Activated CD4-positive, alpha-beta T cell treated with anti-CD3 and anti-CD28 coated beads, Interleukin-2, amount 10 ng/mL, durations not matched to agents 24 days and 14 days (primary cell): ENCODE measurements at regions of chr19 and their contacts with region 1.

Region 1: GRCh38 chr19:5827891-5828660 is 11.4 kb downstream of the FUT6 start:
- DNase-seq: peak; percentile 99
- H3K4me3 Mint-ChIP-seq: peak overlapping the region; percentile 100
- H3K27ac Mint-ChIP-seq: peak overlapping the region; percentile 100
- H3K4me1 Mint-ChIP-seq: peaks cover 8% of the 10 kb centered on the region
- H3K27me3 Mint-ChIP-seq: no peaks in the 10 kb centered on the region

Region 2: DNA sequence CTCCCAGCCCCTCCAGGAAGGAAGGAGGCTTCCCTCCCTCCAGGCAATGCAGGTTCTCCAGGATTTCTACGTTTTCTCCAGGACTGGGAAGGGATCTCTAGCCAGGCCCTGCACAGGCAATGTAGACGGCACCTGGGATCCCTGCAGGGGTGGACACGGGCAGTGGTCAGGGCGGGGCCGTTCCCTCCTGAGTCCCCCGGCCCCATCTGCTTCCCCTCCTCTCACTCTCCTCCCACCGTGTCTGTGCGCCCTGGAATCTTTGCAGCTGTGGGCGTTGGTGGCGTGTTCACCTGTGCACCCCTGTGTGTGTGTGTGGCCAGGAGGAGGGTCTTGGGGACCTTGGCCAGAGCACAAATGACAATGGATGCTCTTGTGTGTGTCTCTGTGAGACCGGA is 13.2 kb before region 1 on chr19:
- intact Hi-C with region 1: no loop called
- DNase-seq: no peak
- H3K4me3 Mint-ChIP-seq: no peak overlapping the region
- H3K27ac Mint-ChIP-seq: no peak overlapping the region
- H3K4me1 Mint-ChIP-seq: no peaks in the 10 kb centered on the region
- H3K27me3 Mint-ChIP-seq: no peaks in the 10 kb centered on the region

Region 3: GRCh38 chr19:5947435-5947834 is 119.4 kb after region 1 on chr19:
- intact Hi-C with region 1: no loop called
- DNase-seq: no peak
- H3K4me3 Mint-ChIP-seq: no peak overlapping the region
- H3K27ac Mint-ChIP-seq: peak overlapping the region; percentile 71
- H3K4me1 Mint-ChIP-seq: peaks cover 56% of the 10 kb centered on the region
- H3K27me3 Mint-ChIP-seq: no peaks in the 10 kb centered on the region

Region 4: GRCh38 chr19:5967994-5968430 is 139.9 kb after region 1 on chr19:
- intact Hi-C with region 1: loop called (anchors 10 kb)
- DNase-seq: peak; percentile 89
- H3K4me3 Mint-ChIP-seq: peak overlapping the region; percentile 24
- H3K27ac Mint-ChIP-seq: peak overlapping the region; percentile 78
- H3K4me1 Mint-ChIP-seq: peaks cover 51% of the 10 kb centered on the region
- H3K27me3 Mint-ChIP-seq: no peaks in the 10 kb centered on the region

Region 5: DNA sequence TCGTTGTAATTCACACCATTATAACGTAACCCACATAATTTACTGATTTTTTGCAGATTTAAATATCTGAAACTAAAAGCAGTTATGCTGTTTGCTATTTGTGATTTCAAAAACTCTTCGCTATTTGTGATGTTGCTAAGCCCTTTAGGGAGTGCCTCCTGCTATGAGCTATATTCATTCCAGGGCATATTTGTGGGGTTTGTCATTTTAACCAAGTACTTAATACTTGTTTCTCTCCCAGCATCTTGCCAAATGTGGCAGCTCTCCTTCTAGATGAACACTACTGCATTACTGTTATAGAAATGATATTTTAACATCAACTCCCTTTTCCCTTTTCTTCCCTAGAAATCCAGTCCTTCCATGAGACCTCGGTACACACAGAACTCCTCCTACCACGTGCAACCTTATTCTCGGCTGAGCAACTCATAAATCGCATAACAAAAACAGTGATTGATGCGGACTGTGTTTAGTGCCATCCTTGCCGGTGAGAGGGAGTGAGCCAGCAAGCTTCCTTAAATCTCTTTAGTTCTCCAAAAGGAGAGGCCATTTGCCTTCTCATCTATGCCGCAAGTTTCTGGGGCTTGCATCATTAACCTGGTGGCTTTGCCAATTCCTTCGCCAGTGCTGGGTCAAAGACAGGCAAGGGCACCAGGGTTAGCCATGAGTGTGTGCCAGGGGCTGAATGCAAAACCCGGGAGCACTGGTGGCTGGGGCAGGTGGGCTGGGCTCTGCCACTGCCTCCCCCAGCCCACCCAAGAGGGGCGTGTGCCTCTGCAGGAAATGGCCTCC is 248.8 kb after region 1 on chr19:
- intact Hi-C with region 1: no loop called
- DNase-seq: no peak
- H3K4me3 Mint-ChIP-seq: no peak overlapping the region
- H3K27ac Mint-ChIP-seq: no peak overlapping the region
- H3K4me1 Mint-ChIP-seq: no peaks in the 10 kb centered on the region
- H3K27me3 Mint-ChIP-seq: no peaks in the 10 kb centered on the region